ENCODE measurements at regions of chr9 and their contacts with region 1.

Region 1: GRCh38 chr9:128370826-128371621 is at the start of gene URM1:
- DNase-seq: peak; percentile 97
- H3K4me3 ChIP-seq: peak within 1 kb of the TSS; percentile 70 to 78
- H3K27ac ChIP-seq: peak within 1 kb of the TSS; percentile 55 to 91
- H3K4me1 ChIP-seq: peaks cover 14% of the 10 kb centered on the region
- H3K27me3 ChIP-seq: no peaks in the 10 kb centered on the region
- CTCF ChIP-seq: no peak
- POLR2A ChIP-seq: peak; percentile 85
- total RNA-seq, gene URM1: 31.5 to 36.8 TPM

Region 2: DNA sequence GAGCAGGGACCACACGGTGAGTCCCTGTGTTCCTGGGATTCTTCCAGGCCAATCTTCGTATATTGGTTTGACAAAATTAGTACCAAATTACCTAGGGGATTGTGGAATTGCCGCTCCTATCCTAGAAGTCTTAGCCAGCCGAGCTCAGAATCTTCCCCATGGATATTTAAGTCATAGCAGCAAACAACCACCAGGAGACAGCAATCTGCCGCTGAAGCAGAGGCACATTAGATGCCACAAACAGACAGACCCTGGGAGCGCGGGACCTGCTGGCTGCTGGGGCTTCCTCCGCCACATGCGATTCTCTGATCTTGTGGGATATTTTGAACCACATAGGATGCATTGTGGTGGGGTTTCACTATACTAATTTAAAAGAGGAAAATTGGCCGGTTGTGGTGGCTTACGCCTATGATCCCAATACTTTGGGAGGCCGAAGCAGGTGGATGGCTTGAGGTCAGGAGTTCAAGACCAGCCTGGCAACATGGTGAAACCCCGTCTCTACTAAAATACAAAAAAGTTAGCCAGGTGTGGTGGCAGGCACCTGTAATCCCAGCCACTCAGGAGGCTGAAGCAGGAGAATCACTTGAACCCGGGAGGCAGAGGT is 1597.9 kb before region 1 on chr9:
- intact Hi-C with region 1: loop called (anchors 5 kb)
- DNase-seq: no peak
- H3K4me3 ChIP-seq: no peak overlapping the region
- H3K27ac ChIP-seq: no peak overlapping the region
- H3K4me1 ChIP-seq: no peaks in the 10 kb centered on the region
- H3K27me3 ChIP-seq: no peaks in the 10 kb centered on the region
- CTCF ChIP-seq: peak in 1 of 3 experiments; percentile 21
- POLR2A ChIP-seq: no peak